Tibial artery (tissue), 4 donors: ENCODE measurements at regions of chrX and their contacts with region 1.

Region 1: GRCh38 chrX:110159235-110159634 is 156.3 kb downstream of the TMEM164 start:
- DNase-seq: no peak
- H3K4me3 ChIP-seq: no peak overlapping the region
- H3K27ac ChIP-seq: no peak overlapping the region
- H3K4me1 ChIP-seq: no peaks in the 10 kb centered on the region
- H3K27me3 ChIP-seq: no peaks in the 10 kb centered on the region
- CTCF ChIP-seq: no peak

Region 2: GRCh38 chrX:110201799-110202198 is 42.6 kb after region 1 on chrX:
- intact Hi-C with region 1: no loop called
- DNase-seq: no peak
- H3K4me3 ChIP-seq: no peak overlapping the region
- H3K27ac ChIP-seq: no peak overlapping the region
- H3K4me1 ChIP-seq: no peaks in the 10 kb centered on the region
- H3K27me3 ChIP-seq: no peaks in the 10 kb centered on the region
- CTCF ChIP-seq: no peak

Region 3: DNA sequence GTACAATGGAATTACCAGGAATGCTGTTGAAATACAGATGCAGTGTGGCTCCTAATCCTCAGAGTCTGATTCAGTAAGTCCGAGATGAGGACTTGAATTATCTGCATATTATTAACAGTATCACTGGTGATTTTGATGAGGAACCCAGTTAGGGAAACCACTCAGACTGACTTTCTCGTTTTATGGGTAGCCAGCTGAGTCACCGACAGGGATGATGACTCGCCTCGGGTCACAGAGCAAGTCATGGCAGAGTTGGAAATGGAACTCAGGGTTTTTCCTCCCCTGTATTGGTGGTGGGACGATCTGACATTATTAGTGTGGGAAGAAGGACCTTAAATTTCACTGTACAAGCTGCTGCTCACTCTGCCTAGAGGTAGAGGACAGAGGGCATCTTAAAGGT is 250.7 kb after region 1 on chrX:
- intact Hi-C with region 1: loop called (anchors 2 kb)
- DNase-seq: no peak
- H3K4me3 ChIP-seq: no peak overlapping the region
- H3K27ac ChIP-seq: no peak overlapping the region
- H3K4me1 ChIP-seq: peaks cover 0 to 7% (median 0%) of the 10 kb centered on the region in 4 donors
- H3K27me3 ChIP-seq: no peaks in the 10 kb centered on the region
- CTCF ChIP-seq: no peak